Activated CD4-positive, alpha-beta T cell treated with anti-CD3 and anti-CD28 coated beads, Interleukin-2, amount 10 ng/mL, durations not matched to agents 24 days and 14 days (primary cell): ENCODE measurements at regions of chr10 and their contacts with region 1.

Region 1: GRCh38 chr10:45594276-45595106 is 78.1 kb downstream of the ZFAND4 start:
- DNase-seq: peak; percentile 98
- H3K4me3 Mint-ChIP-seq: peak overlapping the region; percentile 87
- H3K27ac Mint-ChIP-seq: peak overlapping the region; percentile 64
- H3K4me1 Mint-ChIP-seq: peaks cover 30% of the 10 kb centered on the region
- H3K27me3 Mint-ChIP-seq: peaks cover 7% of the 10 kb centered on the region

Region 2: GRCh38 chr10:45249978-45250693 is 344.4 kb before region 1 on chr10:
- intact Hi-C with region 1: loop called (anchors 10 kb)
- DNase-seq: peak; percentile 74
- H3K4me3 Mint-ChIP-seq: peak overlapping the region; percentile 51
- H3K27ac Mint-ChIP-seq: no peak overlapping the region
- H3K4me1 Mint-ChIP-seq: peaks cover 16% of the 10 kb centered on the region
- H3K27me3 Mint-ChIP-seq: peaks cover 20% of the 10 kb centered on the region

Region 3: DNA sequence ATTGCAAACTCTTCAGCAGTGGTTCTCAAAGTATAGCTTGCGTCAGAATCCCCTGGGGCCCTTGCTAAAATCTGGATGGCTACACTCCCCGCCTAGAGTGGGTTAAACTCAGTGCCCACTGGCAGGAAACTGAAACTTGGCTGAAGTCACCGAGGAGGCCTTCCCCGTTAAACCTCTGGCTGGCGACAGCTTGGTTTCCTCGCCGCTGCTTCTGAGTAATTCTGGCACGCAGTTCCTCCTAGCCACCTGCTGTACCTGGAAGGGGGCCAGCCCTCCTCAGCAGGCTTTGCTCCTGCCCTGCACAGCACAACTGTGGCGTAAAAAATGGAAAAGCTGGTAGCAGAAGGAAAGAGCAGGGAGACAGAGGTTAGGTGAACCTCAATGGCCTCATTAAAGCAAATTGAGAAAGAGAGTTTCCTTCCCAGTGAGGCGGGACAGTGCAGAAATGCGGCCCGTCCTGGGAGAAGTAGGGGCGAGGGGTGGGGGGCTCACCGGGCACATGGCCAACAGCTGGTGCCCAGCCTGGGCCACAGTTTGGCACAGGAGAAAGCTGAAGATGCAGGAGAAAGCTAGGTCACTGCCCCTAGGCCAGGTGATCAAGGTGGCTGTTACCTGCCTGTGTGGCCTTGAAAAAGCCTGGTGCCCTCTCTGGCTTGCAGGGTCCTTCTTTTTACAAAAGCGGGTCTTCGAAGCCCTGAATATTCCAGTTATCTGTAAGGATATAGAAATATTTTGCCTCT is 173.9 kb before region 1 on chr10:
- intact Hi-C with region 1: loop called (anchors 2 kb)
- DNase-seq: peak; percentile 89
- H3K4me3 Mint-ChIP-seq: peak overlapping the region; percentile 98
- H3K27ac Mint-ChIP-seq: peak overlapping the region; percentile 99
- H3K4me1 Mint-ChIP-seq: peaks cover 73% of the 10 kb centered on the region
- H3K27me3 Mint-ChIP-seq: no peaks in the 10 kb centered on the region

Region 4: GRCh38 chr10:45464958-45465567 is 129.4 kb before region 1 on chr10:
- intact Hi-C with region 1: loop called (anchors 2 kb)
- DNase-seq: peak; percentile 92
- H3K4me3 Mint-ChIP-seq: no peak overlapping the region
- H3K27ac Mint-ChIP-seq: no peak overlapping the region
- H3K4me1 Mint-ChIP-seq: peaks cover 39% of the 10 kb centered on the region
- H3K27me3 Mint-ChIP-seq: no peaks in the 10 kb centered on the region

Region 5: GRCh38 chr10:45580371-45581215 is 13.9 kb before region 1 on chr10:
- intact Hi-C with region 1: loop called (anchors 1 kb)
- DNase-seq: peak; percentile 72
- H3K4me3 Mint-ChIP-seq: peak overlapping the region; percentile 78
- H3K27ac Mint-ChIP-seq: peak overlapping the region; percentile 83
- H3K4me1 Mint-ChIP-seq: peaks cover 26% of the 10 kb centered on the region
- H3K27me3 Mint-ChIP-seq: peaks cover 3% of the 10 kb centered on the region

Region 6: DNA sequence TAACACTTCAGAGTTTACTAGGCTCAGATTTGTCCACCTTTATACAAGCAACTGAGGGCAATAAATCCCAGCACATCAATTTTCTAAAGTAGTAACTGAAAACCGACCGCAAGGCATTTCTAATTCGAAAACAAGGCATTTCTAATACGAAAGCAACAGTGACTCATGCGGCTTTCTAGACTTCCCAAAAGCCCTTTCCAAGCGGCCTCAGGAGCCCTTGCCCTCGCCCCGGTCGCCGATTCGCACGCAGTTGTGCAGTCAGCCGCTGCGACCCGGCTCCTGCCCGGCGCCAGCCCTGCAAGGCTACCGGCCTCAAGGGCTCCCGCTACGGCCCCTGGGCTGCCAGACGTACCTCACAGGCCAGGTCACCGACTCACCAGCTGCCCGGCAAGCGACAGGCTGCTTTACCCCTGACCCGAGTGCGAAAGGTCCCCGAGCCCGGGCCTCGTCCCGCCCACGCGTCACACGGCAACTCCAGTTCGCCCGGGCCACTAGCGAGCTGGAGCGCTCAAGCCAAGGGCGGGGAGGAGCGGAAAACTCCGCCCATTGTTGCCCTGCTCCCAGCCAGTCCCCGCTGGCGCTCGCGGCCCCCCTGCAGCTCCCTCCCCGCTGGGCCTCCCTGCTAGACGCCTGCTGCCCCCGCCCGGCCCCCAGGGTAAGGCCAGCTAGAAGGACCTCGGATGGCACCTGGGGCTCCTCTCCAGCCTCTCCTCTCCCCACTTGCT is 428.6 kb after region 1 on chr10:
- intact Hi-C with region 1: loop called (anchors 10 kb)
- DNase-seq: peak; percentile 95
- H3K4me3 Mint-ChIP-seq: peak overlapping the region; percentile 85
- H3K27ac Mint-ChIP-seq: peak overlapping the region; percentile 72
- H3K4me1 Mint-ChIP-seq: peaks cover 58% of the 10 kb centered on the region
- H3K27me3 Mint-ChIP-seq: no peaks in the 10 kb centered on the region